CD8-positive, alpha-beta T cell (primary cell): ENCODE measurements at regions of chr2 and their contacts with region 1.

Region 1: GRCh38 chr2:24409700-24410556 is 49.6 kb upstream of the ITSN2 start:
- DNase-seq: peak in 8 of 9 experiments; percentile 2 to 79 (median 33)
- ATAC-seq: peak; percentile 71
- H3K4me3 ChIP-seq: no peak overlapping the region
- H3K4me3 Mint-ChIP-seq: no peak overlapping the region
- H3K27ac ChIP-seq: no peak overlapping the region
- H3K27ac Mint-ChIP-seq: no peak overlapping the region
- H3K4me1 ChIP-seq: no peaks in the 10 kb centered on the region
- H3K4me1 Mint-ChIP-seq: no peaks in the 10 kb centered on the region
- H3K27me3 ChIP-seq: peaks cover 0 to 5% of the 10 kb centered on the region in 2 experiments
- H3K27me3 Mint-ChIP-seq: peaks cover 12% of the 10 kb centered on the region
- CTCF ChIP-seq: peak; percentile 88

Region 2: DNA sequence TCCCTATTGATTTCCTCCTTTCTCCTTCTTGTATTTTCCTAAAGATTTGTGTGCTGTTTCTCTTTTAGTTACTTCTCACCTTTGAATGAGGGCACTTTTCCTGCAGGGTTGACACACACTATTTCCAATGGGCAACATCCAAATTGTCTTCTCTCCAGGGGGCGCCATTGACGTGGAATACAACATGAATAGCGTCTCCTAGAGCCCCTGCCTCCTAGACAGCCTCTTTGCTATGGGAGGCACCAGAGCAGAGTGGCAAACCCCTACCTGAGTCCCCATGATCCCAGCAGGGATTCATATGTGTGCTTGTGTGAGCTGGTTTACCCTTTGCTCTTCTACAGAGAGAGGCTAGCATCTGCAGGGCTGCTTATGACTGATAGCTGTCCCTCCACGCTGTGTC is 11.7 kb after region 1 on chr2:
- CTCF ChIA-PET with region 1: interaction called, 28 read pairs
- POLR2A ChIA-PET with region 1: interaction called, 5 read pairs
- intact Hi-C with region 1: no loop called
- DNase-seq: peak; percentile 13 to 69 (median 51)
- ATAC-seq: no peak
- H3K4me3 ChIP-seq: no peak overlapping the region
- H3K4me3 Mint-ChIP-seq: no peak overlapping the region
- H3K27ac ChIP-seq: no peak overlapping the region
- H3K27ac Mint-ChIP-seq: no peak overlapping the region
- H3K4me1 ChIP-seq: no peaks in the 10 kb centered on the region
- H3K4me1 Mint-ChIP-seq: no peaks in the 10 kb centered on the region
- H3K27me3 ChIP-seq: no peaks in the 10 kb centered on the region
- H3K27me3 Mint-ChIP-seq: no peaks in the 10 kb centered on the region
- CTCF ChIP-seq: no peak

Region 3: DNA sequence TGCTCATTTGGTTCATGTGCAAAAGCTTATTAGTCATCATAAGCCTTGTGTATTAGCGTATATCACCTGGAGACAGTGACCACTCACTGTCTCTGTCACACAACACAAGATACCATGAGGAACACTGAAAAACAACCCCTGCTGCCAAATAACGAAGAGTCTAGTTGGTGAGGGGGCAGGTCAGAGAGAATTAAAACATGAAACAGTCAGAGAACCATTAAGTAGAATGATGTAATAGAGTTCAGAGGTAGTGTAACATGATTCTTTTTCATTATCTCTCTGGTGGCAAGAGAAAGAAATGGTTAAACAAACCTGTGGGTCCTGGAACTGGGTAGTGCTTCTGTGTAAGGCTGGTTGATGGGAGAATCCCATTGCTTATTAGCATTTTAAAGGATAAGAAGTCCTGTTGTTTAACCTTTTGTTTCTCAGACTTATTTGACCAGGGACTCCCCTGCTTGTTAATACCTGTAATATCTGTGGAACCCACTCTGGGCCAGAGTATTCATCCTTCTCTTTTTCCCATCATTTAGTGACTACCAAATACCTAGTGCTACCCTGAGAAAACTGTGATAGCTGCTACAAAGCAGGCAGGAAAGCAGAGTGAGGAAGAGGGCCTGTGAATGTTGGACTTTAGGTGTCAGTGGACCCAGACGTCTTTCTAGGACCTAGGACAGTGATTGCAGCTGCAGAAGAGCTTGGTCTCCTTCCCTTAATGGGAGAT is 345.2 kb after region 1 on chr2:
- CTCF ChIA-PET with region 1: no interaction called
- POLR2A ChIA-PET with region 1: no interaction called
- intact Hi-C with region 1: loop called in 1 of 2 experiments (anchors 10 kb)
- DNase-seq: no peak
- ATAC-seq: no peak
- H3K4me3 ChIP-seq: no peak overlapping the region
- H3K4me3 Mint-ChIP-seq: no peak overlapping the region
- H3K27ac ChIP-seq: no peak overlapping the region
- H3K27ac Mint-ChIP-seq: no peak overlapping the region
- H3K4me1 ChIP-seq: no peaks in the 10 kb centered on the region
- H3K4me1 Mint-ChIP-seq: no peaks in the 10 kb centered on the region
- H3K27me3 ChIP-seq: no peaks in the 10 kb centered on the region
- H3K27me3 Mint-ChIP-seq: no peaks in the 10 kb centered on the region
- CTCF ChIP-seq: no peak

Region 4: GRCh38 chr2:24827321-24828237 is 417.7 kb after region 1 on chr2:
- CTCF ChIA-PET with region 1: interaction called, 209 read pairs
- POLR2A ChIA-PET with region 1: interaction called, 3 read pairs
- intact Hi-C with region 1: loop called (anchors 1 kb)
- DNase-seq: peak; percentile 52 to 86 (median 71)
- ATAC-seq: peak; percentile 93
- H3K4me3 ChIP-seq: no peak overlapping the region
- H3K4me3 Mint-ChIP-seq: no peak overlapping the region
- H3K27ac ChIP-seq: peak overlapping the region in 1 of 2 experiments; percentile 49
- H3K27ac Mint-ChIP-seq: no peak overlapping the region
- H3K4me1 ChIP-seq: no peaks in the 10 kb centered on the region
- H3K4me1 Mint-ChIP-seq: peaks cover 12% of the 10 kb centered on the region
- H3K27me3 ChIP-seq: no peaks in the 10 kb centered on the region
- H3K27me3 Mint-ChIP-seq: no peaks in the 10 kb centered on the region
- CTCF ChIP-seq: peak; percentile 67

Region 5: GRCh38 chr2:25131567-25132298 is 721.8 kb after region 1 on chr2:
- CTCF ChIA-PET with region 1: interaction called, 28 read pairs
- POLR2A ChIA-PET with region 1: no interaction called
- intact Hi-C with region 1: loop called in 1 of 2 experiments (anchors 1 kb)
- DNase-seq: peak in 3 of 9 experiments; percentile 21 to 27 (median 25)
- ATAC-seq: peak; percentile 34
- H3K4me3 ChIP-seq: no peak overlapping the region
- H3K4me3 Mint-ChIP-seq: peak overlapping the region; percentile 77
- H3K27ac ChIP-seq: no peak overlapping the region
- H3K27ac Mint-ChIP-seq: no peak overlapping the region
- H3K4me1 ChIP-seq: no peaks in the 10 kb centered on the region
- H3K4me1 Mint-ChIP-seq: peaks cover 12% of the 10 kb centered on the region
- H3K27me3 ChIP-seq: peaks cover 18 to 22% of the 10 kb centered on the region in 2 experiments
- H3K27me3 Mint-ChIP-seq: peaks cover 48% of the 10 kb centered on the region
- CTCF ChIP-seq: no peak

Region 6: DNA sequence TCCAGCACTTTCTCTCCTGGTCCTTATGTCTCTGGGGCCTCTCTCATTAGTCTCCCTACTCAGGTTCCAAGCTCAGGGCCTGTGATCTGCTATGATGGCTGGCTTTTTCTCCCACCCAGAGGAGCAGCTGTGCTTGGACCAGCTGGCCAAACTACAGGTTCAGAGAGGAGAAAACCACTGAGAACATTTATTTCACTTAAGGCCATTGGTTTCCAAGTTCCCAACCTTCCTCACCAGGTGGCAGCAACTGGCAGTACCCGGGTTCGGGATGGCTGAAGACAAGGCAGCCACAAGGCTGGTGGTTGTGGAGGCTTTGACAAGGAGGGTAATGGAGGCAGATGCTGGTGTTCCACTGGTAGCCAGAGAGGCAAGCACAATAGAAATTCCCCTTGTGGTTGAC is 1906.1 kb after region 1 on chr2:
- CTCF ChIA-PET with region 1: no interaction called
- POLR2A ChIA-PET with region 1: no interaction called
- intact Hi-C with region 1: no loop called
- DNase-seq: no peak
- ATAC-seq: no peak
- H3K4me3 ChIP-seq: no peak overlapping the region
- H3K4me3 Mint-ChIP-seq: no peak overlapping the region
- H3K27ac ChIP-seq: no peak overlapping the region
- H3K27ac Mint-ChIP-seq: no peak overlapping the region
- H3K4me1 ChIP-seq: no peaks in the 10 kb centered on the region
- H3K4me1 Mint-ChIP-seq: no peaks in the 10 kb centered on the region
- H3K27me3 ChIP-seq: no peaks in the 10 kb centered on the region
- H3K27me3 Mint-ChIP-seq: no peaks in the 10 kb centered on the region
- CTCF ChIP-seq: no peak